Left cardiac atrium (tissue), 4 donors: ENCODE measurements at regions of chr5 and their contacts with region 1.

Region 1: GRCh38 chr5:141598391-141599350 is 20.1 kb downstream of the DIAPH1 start:
- DNase-seq: no peak
- ATAC-seq: peak; percentile 80 to 88

Region 2: DNA sequence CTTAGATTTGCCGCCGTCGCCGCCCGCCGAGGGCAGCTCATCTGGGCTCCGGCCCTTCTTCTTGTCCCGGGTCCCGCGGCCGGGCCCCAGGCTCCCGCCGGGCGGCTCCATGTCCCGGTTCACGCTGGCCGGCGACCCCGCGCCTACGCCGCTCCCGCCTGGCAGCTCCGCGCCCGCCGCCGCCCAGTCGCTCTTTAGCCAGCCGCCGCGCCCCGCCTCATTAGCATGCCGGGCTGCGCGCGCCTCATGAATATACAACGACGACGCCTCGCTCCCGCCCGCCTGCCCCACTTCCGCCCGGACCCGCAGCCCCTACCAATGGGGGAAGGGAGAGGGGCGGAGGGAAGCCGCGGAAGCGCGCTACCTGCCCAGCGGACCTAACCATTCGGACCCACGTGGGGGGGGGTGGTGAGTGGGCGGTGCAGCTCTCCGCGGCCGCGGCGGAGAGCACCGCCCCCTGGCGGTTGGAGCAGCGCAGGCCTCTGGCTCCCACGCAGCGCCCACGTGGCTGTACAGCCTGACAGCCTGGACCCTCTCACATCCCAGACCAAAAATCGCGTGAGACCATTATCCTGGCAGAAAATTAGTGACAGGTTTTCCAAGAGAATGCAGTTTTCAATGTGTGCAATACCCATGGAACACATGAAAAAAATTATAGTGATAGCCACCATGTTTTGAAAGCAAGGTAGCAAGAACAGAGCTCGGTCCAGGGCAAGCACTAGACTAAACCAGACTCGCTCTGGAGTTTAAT is 20.3 kb after region 1 on chr5 and contains the start of gene DIAPH1:
- intact Hi-C with region 1: loop called in 1 of 2 experiments (anchors 2 kb)
- DNase-seq: peak; percentile 98
- ATAC-seq: peak; percentile 96 to 97
- total RNA-seq, gene DIAPH1: 25.9 to 39.4 TPM